Activated CD4-positive, alpha-beta memory T cell treated with anti-CD3 and anti-CD28 coated beads, Interleukin-2, amount 10 ng/mL, durations not matched to agents 7 days and 5 days (primary cell): ENCODE measurements at regions of chr11 and their contacts with region 1.

Region 1: DNA sequence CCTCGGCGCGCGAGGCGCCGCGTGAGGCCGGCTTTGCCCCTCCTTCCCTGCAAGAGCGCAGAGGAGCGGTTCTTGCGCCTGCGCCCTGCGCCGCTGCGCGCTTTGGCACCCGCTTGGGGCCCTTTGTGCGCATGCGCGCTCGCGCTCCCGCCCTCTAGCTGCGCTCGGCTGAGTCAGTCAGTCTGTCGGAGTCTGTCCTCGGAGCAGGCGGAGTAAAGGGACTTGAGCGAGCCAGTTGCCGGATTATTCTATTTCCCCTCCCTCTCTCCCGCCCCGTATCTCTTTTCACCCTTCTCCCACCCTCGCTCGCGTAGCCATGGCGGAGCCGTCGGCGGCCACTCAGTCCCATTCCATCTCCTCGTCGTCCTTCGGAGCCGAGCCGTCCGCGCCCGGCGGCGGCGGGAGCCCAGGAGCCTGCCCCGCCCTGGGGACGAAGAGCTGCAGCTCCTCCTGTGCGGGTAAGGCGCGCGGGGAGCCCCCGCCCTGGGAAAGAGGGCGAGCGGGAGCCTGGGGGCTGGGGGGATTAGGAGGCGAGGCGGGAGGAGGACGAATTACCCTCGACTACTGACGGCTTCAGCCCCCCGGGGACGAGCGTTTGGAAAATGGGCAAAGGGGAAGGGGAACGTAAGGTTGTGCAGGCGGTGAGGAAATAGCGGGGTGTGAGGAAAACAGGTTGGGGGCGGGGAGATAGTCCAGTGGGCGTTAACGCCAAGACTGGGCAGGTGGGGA is at the start of gene RTN3:
- DNase-seq: peak; percentile 99
- H3K4me3 Mint-ChIP-seq: peak within 1 kb of the TSS; percentile 81
- H3K27ac Mint-ChIP-seq: peak within 1 kb of the TSS; percentile 87
- H3K4me1 Mint-ChIP-seq: peaks cover 32% of the 10 kb centered on the region
- H3K27me3 Mint-ChIP-seq: peaks cover 3% of the 10 kb centered on the region
- total RNA-seq, gene RTN3: 68.2 to 75.6 TPM

Region 2: DNA sequence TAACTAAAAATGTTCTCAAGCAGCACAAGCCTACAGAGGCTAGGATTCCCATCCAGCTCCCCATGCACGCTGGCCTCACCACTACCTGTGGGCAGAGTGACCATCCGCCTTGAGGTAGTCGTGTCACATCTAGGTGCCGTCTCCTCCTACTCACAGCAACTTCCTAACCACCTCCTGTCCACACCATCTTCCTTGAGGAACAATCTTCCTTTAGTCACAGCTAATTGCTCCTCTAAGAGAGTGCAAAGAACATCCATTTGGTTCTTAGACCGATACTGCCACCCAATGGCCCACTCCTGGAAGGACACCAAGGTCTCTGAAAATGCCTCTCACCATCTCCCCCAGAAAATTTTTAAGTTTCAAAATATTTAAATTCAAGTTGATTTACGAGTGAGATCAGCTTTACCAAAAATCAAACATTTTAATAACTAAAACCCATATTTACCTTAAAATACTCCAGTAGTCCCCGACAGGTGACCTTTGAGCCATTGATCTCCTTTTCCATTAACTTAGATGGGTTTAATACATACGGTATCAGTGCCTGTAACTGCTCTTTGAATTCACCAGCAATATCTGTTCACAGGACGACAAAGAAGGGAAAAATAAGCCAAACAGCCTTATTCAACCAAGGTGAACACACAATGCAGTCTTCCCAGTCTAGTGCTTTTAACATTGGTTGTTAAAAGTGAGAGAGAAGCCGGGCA is 45.6 kb before region 1 on chr11:
- CTCF ChIA-PET with region 1: interaction called, 10 read pairs
- POLR2A ChIA-PET with region 1: interaction called, 3 read pairs
- DNase-seq: peak; percentile 72
- H3K4me3 Mint-ChIP-seq: no peak overlapping the region
- H3K27ac Mint-ChIP-seq: no peak overlapping the region
- H3K4me1 Mint-ChIP-seq: peaks cover 17% of the 10 kb centered on the region
- H3K27me3 Mint-ChIP-seq: no peaks in the 10 kb centered on the region

Region 3: GRCh38 chr11:63652671-63653070 is 28.8 kb before region 1 on chr11:
- CTCF ChIA-PET with region 1: no interaction called
- POLR2A ChIA-PET with region 1: no interaction called
- DNase-seq: no peak
- H3K4me3 Mint-ChIP-seq: no peak overlapping the region
- H3K27ac Mint-ChIP-seq: peak overlapping the region; percentile 61
- H3K4me1 Mint-ChIP-seq: peaks cover 14% of the 10 kb centered on the region
- H3K27me3 Mint-ChIP-seq: no peaks in the 10 kb centered on the region

Region 4: DNA sequence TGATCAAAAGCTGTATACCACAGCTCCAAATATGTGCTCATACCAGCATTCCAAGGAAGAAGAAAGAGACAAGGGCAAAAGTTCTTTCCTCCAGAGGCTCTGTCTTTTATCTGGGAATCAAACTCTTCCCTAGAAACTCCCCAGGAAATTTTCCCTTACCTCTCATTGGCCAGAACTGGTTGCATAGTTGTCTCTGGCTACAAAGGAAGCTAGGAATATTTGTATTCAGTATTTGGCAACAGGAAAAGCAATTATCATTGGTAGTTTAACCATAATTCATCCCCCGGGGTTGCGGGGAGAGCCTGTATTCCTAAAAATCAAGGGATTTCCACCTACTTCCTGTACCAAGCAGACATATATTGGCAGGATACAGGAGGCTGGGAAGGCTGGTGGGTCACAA is 97.6 kb after region 1 on chr11:
- CTCF ChIA-PET with region 1: no interaction called
- POLR2A ChIA-PET with region 1: no interaction called
- DNase-seq: no peak
- H3K4me3 Mint-ChIP-seq: no peak overlapping the region
- H3K27ac Mint-ChIP-seq: no peak overlapping the region
- H3K4me1 Mint-ChIP-seq: no peaks in the 10 kb centered on the region
- H3K27me3 Mint-ChIP-seq: peaks cover 21% of the 10 kb centered on the region